BJ (cell line): ENCODE measurements at regions of chr12 and their contacts with region 1.

Region 1: DNA sequence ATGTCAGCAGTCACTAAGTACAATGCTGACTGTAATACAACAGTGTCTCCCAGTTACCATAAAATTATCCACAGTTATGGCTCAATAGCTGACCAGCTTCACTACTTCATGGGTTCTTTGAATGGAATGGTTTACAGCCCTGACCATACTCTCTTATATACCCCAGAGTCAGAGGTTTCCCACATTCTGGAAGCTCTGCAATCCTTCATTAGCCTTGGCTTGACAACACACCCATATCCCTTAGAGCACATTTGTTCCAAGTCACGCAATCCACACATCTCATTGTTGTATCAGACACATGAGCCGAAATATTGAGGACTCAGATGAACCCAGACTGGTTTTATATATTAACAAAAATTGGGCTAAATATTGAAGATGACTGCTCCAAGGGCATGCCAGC is 209.4 kb upstream of the PLXNC1 start:
- DNase-seq: peak; percentile 26
- H3K4me3 ChIP-seq: no peak overlapping the region
- H3K27me3 ChIP-seq: no peaks in the 10 kb centered on the region
- CTCF ChIP-seq: no peak

Region 2: GRCh38 chr12:93682846-93683261 is 256.1 kb before region 1 on chr12:
- CTCF ChIA-PET with region 1: no interaction called
- POLR2A ChIA-PET with region 1: no interaction called
- DNase-seq: no peak
- H3K4me3 ChIP-seq: no peak overlapping the region
- H3K27me3 ChIP-seq: no peaks in the 10 kb centered on the region
- CTCF ChIP-seq: no peak

Region 3: GRCh38 chr12:93918262-93918661 is 20.7 kb before region 1 on chr12:
- CTCF ChIA-PET with region 1: interaction called, 4 read pairs
- POLR2A ChIA-PET with region 1: interaction called, 30 read pairs
- DNase-seq: peak; percentile 83
- H3K4me3 ChIP-seq: no peak overlapping the region
- H3K27me3 ChIP-seq: no peaks in the 10 kb centered on the region
- CTCF ChIP-seq: no peak